ENCODE measurements at regions of chr4 and their contacts with region 1.

Region 1: GRCh38 chr4:142846729-142847596 is 862 bp upstream of the INPP4B start:
- DNase-seq: peak; percentile 32 to 56
- H3K4me3 ChIP-seq: peak overlapping the region; percentile 50 to 79 (median 58)
- H3K27ac ChIP-seq: peak overlapping the region in 1 of 2 donors; percentile 16
- H3K4me1 ChIP-seq: no peaks in the 10 kb centered on the region
- H3K27me3 ChIP-seq: peaks cover 0 to 23% of the 10 kb centered on the region in 2 donors
- CTCF ChIP-seq: peak; percentile 14 to 55 (median 37)
- POLR2A ChIP-seq: no peak

Region 2: GRCh38 chr4:142126890-142127497 is 720.0 kb before region 1 on chr4:
- intact Hi-C with region 1: loop called (anchors 10 kb)
- DNase-seq: peak in 1 of 2 donors; percentile 32
- H3K4me3 ChIP-seq: no peak overlapping the region
- H3K27ac ChIP-seq: no peak overlapping the region
- H3K4me1 ChIP-seq: no peaks in the 10 kb centered on the region
- H3K27me3 ChIP-seq: no peaks in the 10 kb centered on the region
- CTCF ChIP-seq: peak in 2 of 3 donors; percentile 70 to 78
- POLR2A ChIP-seq: no peak

Region 3: GRCh38 chr4:142353149-142353738 is 493.7 kb before region 1 on chr4:
- intact Hi-C with region 1: loop called (anchors 10 kb)
- DNase-seq: no peak
- H3K4me3 ChIP-seq: no peak overlapping the region
- H3K27ac ChIP-seq: no peak overlapping the region
- H3K4me1 ChIP-seq: no peaks in the 10 kb centered on the region
- H3K27me3 ChIP-seq: no peaks in the 10 kb centered on the region
- CTCF ChIP-seq: peak; percentile 52 to 75 (median 59)
- POLR2A ChIP-seq: no peak

Region 4: GRCh38 chr4:142817442-142817841 is 29.5 kb before region 1 on chr4:
- intact Hi-C with region 1: no loop called
- DNase-seq: peak in 1 of 2 donors; percentile 35
- H3K4me3 ChIP-seq: peak overlapping the region in 1 of 3 donors; percentile 0
- H3K27ac ChIP-seq: peak overlapping the region in 1 of 2 donors; percentile 62
- H3K4me1 ChIP-seq: peaks cover 0 to 7% of the 10 kb centered on the region in 2 donors
- H3K27me3 ChIP-seq: no peaks in the 10 kb centered on the region
- CTCF ChIP-seq: no peak
- POLR2A ChIP-seq: no peak

Region 5: GRCh38 chr4:142858965-142859364 is 12.0 kb after region 1 on chr4:
- intact Hi-C with region 1: loop called (anchors 1 kb)
- DNase-seq: no peak
- H3K4me3 ChIP-seq: no peak overlapping the region
- H3K27ac ChIP-seq: no peak overlapping the region
- H3K4me1 ChIP-seq: no peaks in the 10 kb centered on the region
- H3K27me3 ChIP-seq: no peaks in the 10 kb centered on the region
- CTCF ChIP-seq: no peak
- POLR2A ChIP-seq: no peak

Region 6: GRCh38 chr4:143270256-143270838 is 423.4 kb after region 1 on chr4:
- intact Hi-C with region 1: no loop called
- DNase-seq: peak in 1 of 2 donors; percentile 29
- H3K4me3 ChIP-seq: no peak overlapping the region
- H3K27ac ChIP-seq: no peak overlapping the region
- H3K4me1 ChIP-seq: no peaks in the 10 kb centered on the region
- H3K27me3 ChIP-seq: no peaks in the 10 kb centered on the region
- CTCF ChIP-seq: no peak
- POLR2A ChIP-seq: no peak